BJ (cell line): ENCODE measurements at regions of chr6 and their contacts with region 1.

Region 1: DNA sequence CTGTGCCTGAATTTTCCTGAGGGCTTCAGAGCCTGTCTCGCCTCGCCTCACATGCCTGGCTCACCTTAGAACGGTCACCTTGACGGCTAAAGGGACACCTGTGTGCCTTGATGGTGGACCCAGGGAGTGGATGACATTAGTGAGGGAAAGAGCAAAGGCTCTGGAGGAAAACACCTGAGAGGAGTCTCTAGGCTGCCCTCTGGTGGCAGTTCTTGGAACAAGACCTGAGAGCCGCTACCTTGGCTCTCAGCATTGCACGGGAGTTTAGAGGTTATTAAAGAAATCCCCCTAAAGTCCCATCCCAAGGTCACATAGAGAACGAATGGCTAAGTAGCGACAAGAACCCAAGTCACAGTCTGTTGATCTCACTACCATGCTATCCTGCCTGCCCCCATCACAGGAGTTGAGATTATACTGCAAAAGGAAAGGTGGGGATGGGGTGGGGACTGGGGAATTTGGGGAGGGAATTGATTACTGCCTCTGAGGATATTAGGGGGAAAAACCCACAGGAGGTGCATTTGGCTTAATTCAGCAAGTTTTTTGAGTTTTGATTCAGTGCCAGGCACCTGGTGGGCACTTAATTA is 7.9 kb upstream of the CDSN start:
- DNase-seq: no peak
- H3K4me3 ChIP-seq: no peak overlapping the region
- H3K27me3 ChIP-seq: no peaks in the 10 kb centered on the region; the same call in 1 of the 2 replicates
- CTCF ChIP-seq: peak; percentile 92

Region 2: DNA sequence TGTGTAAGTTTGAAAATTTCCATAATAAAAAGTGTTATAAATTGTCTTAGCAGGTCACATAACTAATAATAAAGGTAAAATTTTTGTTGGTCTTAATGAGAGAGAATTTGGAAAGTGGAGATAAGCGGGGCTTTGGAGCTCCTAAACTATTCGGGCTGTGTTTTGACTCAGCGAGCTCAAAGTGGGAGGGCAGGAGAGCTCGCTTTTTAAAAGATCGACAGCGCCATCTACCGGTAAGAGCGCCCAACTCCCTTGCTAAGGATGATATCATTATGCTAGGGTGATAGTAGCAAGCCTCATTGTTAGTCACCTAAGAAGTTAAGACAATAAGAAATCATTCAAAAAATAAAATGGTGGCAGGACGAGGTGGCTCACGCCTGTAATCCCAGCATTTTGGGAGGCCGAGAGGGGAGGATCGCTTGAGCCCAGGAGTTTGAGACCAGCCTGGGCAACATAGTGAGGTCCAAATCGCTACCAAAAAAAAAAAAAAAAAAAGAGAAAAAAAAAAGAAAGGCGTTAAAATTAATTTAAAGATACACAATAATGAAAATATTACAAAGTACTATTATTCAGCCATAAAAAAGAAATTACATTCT is 40.6 kb before region 1 on chr6:
- CTCF ChIA-PET with region 1: interaction called, 30 read pairs
- POLR2A ChIA-PET with region 1: no interaction called
- DNase-seq: no peak
- H3K4me3 ChIP-seq: no peak overlapping the region
- H3K27me3 ChIP-seq: no peaks in the 10 kb centered on the region; the same call in 1 of the 2 replicates
- CTCF ChIP-seq: peak; percentile 69

Region 3: GRCh38 chr6:31114970-31115849 is 13.0 kb before region 1 on chr6:
- CTCF ChIA-PET with region 1: interaction called, 30 read pairs
- POLR2A ChIA-PET with region 1: interaction called, 11 read pairs
- DNase-seq: no peak
- H3K4me3 ChIP-seq: peak overlapping the region; percentile 36
- H3K27me3 ChIP-seq: 0 out of 2 replicates have a peak, but pooled peaks cover 2% of the 10 kb centered on the region
- CTCF ChIP-seq: peak; percentile 52

Region 4: GRCh38 chr6:31143148-31143547 is 15.0 kb after region 1 on chr6:
- CTCF ChIA-PET with region 1: interaction called, 21 read pairs
- POLR2A ChIA-PET with region 1: no interaction called
- DNase-seq: no peak
- H3K4me3 ChIP-seq: no peak overlapping the region
- H3K27me3 ChIP-seq: no peaks in the 10 kb centered on the region
- CTCF ChIP-seq: no peak

Region 5: DNA sequence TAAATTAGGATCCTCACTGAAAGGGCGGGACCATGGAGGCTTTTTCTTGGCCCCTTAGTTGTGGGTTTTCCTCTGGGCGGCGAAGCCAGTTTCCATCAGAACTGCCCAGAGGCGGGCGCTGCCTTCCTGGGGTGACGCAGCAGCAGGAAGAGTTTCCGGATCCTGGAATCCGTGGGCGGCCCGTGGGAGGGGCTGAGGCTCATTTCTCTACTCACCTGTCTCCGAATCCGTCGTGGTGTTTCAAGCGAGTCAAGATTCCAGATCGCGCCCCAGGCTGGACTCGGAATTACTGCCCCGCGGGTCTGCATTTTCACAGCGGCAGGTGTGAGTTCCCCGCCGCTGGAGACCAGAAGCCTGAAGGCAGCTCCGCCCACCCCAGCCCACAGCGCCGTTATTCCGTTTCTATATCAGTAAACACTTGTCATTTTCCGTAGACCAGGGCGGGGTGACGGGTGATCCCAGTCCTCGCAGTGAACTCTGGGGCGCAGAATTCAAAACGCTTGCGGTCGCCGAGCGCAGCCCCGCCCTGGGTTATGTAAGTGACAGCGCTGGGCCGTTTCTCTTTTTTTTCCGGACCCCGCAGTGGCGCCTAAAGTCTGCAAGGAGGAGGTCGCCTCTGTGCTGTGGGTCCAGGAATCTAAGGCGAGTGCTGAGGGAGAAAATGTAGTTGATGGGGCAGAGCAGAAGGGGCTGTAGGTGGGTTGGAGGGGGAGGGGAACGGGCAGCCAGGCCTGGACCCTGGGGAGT is 69.5 kb after region 1 on chr6:
- CTCF ChIA-PET with region 1: interaction called, 66 read pairs
- POLR2A ChIA-PET with region 1: no interaction called
- DNase-seq: peak; percentile 30
- H3K4me3 ChIP-seq: peak overlapping the region; percentile 57
- H3K27me3 ChIP-seq: no peaks in the 10 kb centered on the region
- CTCF ChIP-seq: no peak

Region 6: DNA sequence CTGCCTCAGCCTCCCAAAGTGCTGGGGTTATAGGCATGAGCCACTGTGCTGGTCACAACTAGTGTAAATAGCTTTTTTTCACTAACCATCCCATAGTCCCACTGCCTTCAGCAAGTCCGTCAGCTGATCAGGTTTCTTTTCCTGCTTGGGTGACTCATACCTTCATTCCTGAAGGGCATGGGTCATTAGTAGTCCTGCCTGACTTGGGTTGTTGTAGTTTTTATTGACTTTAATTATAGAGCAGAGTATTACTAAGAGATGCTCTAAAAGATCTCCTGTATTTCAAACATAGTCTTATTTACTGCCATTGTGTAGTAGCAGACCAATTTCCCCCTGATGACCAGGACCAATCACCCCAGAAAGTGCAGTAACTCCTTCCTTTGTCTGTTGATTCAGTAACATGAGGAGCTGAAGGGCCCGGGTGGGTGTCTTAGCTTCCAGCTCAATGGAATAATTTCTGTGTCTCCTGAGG is 117.9 kb after region 1 on chr6:
- CTCF ChIA-PET with region 1: no interaction called
- POLR2A ChIA-PET with region 1: no interaction called
- DNase-seq: peak; percentile 50
- H3K4me3 ChIP-seq: no peak overlapping the region
- H3K27me3 ChIP-seq: peaks cover 9% of the 10 kb centered on the region
- CTCF ChIP-seq: no peak

Region 7: GRCh38 chr6:31366693-31367470 is 238.7 kb after region 1 on chr6:
- CTCF ChIA-PET with region 1: interaction called, 11 read pairs
- POLR2A ChIA-PET with region 1: no interaction called
- DNase-seq: peak; percentile 35
- H3K4me3 ChIP-seq: peak overlapping the region; percentile 17; the same call in 1 of the 2 replicates
- H3K27me3 ChIP-seq: peaks cover 17% of the 10 kb centered on the region
- CTCF ChIP-seq: peak; percentile 96